Calu3 (cell line): ENCODE measurements at regions of chr21 and their contacts with region 1.

Region 1: DNA sequence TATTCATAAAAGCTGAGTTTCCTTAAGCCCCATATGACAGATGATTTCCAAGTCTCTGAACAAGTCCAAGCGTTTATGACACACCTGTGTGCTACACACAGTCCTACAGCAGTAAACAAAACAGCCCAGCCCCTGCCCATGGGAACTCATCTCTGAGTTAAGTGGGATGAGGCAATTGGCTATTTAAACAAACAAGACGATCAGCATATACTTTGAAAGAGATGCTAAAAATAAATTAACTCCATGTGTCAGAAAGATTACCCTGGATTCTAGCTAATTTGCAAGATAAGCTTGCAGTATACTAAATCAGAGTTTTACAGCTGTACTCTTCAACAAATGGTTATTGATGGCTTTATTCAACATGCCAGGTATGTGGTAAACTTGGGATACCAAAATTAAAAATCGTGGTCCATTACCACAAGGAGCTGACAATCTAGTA is 7.0 kb downstream of the PSMG1 start:
- DNase-seq: no peak
- H3K4me3 Mint-ChIP-seq: no peak overlapping the region
- H3K27ac Mint-ChIP-seq: no peak overlapping the region
- H3K4me1 Mint-ChIP-seq: peaks cover 8% of the 10 kb centered on the region
- H3K27me3 Mint-ChIP-seq: no peaks in the 10 kb centered on the region
- CTCF ChIP-seq: no peak

Region 2: DNA sequence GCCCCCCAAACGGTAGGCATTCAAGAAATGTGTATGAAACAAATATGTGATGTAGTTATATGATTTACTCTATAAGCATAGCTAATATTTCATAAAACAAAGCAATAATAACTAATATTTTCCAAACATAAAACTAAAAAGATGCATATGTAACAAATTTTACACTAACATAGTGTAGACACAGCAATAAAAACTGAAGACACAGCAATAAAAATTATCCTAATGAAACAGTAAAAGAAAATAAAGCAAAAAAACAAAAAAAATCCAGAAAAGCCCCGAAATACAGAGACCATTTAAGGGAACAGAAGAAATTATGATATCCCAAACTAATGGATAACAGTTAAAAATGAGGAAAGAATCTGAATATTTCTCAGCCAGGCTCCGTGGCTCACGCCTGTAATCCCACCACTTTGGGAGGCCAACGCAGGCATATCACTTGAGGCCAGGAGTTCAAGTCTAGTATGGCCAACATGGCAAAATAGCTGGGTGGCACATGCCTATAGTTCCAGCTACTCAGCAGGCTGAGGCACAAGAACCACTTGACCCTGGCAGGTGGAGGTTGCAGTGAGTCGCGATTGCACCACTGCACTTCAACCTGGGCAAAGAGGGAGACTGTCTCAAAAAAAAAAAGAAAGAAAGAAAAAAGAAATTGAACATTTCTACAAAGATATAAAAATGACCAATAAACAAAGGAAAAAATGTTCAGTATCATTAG is 45.1 kb after region 1 on chr21:
- CTCF ChIA-PET with region 1: interaction called, 12 read pairs
- intact Hi-C with region 1: no loop called
- DNase-seq: no peak
- H3K4me3 Mint-ChIP-seq: no peak overlapping the region
- H3K27ac Mint-ChIP-seq: no peak overlapping the region
- H3K4me1 Mint-ChIP-seq: no peaks in the 10 kb centered on the region
- H3K27me3 Mint-ChIP-seq: no peaks in the 10 kb centered on the region
- CTCF ChIP-seq: no peak